GM23248 (cell line): ENCODE measurements at regions of chr4 and their contacts with region 1.

Region 1: GRCh38 chr4:83639849-83640493 is 104.1 kb downstream of the GPAT3 start:
- DNase-seq: peak; percentile 83
- H3K4me3 ChIP-seq: no peak overlapping the region
- H3K27ac ChIP-seq: no peak overlapping the region
- H3K4me1 ChIP-seq: peaks cover 2% of the 10 kb centered on the region; the same call in 1 of the 2 replicates
- H3K27me3 ChIP-seq: no peaks in the 10 kb centered on the region

Region 2: GRCh38 chr4:83362492-83363329 is 277.3 kb before region 1 on chr4:
- in situ Hi-C with region 1: loop called (anchors 25 kb)
- DNase-seq: peak; percentile 65
- H3K4me3 ChIP-seq: no peak overlapping the region
- H3K27ac ChIP-seq: no peak overlapping the region
- H3K4me1 ChIP-seq: peaks cover 13% of the 10 kb centered on the region
- H3K27me3 ChIP-seq: no peaks in the 10 kb centered on the region

Region 3: DNA sequence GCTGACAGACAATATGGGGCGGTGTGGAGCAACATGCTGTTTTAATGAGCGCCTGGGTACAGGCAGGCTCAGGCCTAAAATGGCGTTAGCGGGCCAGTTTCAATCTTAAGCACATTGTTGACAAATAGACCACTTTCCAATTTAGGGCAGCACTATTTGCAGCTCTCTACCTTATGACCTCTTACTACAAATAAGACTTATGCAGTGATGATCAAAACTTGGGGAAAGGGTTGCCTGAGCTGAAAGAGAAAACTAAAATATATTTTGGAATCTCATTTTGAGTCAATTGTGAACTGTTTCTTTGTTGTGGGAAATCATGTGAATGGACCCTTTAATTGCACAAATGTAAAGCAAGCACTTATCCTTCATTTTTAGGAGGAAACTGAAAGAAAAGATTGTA is 129.5 kb before region 1 on chr4:
- in situ Hi-C with region 1: loop called (anchors 5 kb)
- DNase-seq: no peak
- H3K4me3 ChIP-seq: no peak overlapping the region
- H3K27ac ChIP-seq: no peak overlapping the region
- H3K4me1 ChIP-seq: peaks cover under 1% of the 10 kb centered on the region; the same call in 1 of the 2 replicates
- H3K27me3 ChIP-seq: no peaks in the 10 kb centered on the region

Region 4: DNA sequence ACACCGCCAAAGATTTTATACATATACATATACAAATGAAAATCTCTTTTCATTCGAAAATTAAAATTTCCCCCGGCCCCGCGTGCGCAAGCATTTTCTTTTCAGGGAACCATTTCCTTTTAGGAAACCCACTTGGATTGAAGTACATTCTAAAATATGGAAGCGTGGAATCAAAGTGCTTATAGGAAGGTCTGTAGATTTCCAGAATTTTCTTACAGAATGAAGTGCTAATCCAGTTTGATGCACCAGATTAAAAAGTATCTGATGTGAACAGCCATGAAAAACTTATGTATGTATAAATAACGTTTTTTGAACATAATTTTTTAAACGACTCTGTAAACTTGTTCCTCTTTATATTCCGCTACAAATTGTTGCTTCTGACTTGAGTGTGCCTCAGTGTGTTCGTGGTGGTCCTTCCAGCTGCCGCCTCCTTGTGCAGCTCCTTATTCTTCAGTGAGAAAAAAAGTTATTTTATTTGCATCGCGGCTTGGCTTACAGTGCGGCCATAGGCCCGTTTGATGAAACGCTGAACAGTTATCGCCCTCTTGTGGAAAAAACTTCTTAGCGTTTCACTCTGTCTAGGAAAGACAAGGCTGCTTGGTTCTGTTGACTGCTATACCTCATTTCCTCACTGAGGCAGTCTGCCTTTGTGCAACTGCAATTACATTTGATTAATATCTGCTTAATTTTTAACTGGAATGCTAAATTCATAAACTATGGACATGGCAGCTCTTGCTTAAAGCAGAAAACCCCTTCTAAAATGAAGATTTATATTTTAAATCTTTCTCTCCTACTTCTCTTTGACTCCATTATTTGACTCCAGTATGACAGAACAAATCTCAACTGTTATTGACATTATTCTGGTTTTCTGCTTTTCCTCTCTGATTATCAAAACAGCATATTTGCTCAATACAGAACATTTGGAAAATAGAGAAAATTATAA is 863.8 kb after region 1 on chr4:
- in situ Hi-C with region 1: loop called (anchors 10 kb)
- DNase-seq: peak; percentile 83
- H3K4me3 ChIP-seq: no peak overlapping the region
- H3K27ac ChIP-seq: no peak overlapping the region
- H3K4me1 ChIP-seq: no peaks in the 10 kb centered on the region
- H3K27me3 ChIP-seq: peaks cover 86% of the 10 kb centered on the region